Psoas muscle (tissue), 8 donors: ENCODE measurements at regions of chr11 and their contacts with region 1.

Region 1: DNA sequence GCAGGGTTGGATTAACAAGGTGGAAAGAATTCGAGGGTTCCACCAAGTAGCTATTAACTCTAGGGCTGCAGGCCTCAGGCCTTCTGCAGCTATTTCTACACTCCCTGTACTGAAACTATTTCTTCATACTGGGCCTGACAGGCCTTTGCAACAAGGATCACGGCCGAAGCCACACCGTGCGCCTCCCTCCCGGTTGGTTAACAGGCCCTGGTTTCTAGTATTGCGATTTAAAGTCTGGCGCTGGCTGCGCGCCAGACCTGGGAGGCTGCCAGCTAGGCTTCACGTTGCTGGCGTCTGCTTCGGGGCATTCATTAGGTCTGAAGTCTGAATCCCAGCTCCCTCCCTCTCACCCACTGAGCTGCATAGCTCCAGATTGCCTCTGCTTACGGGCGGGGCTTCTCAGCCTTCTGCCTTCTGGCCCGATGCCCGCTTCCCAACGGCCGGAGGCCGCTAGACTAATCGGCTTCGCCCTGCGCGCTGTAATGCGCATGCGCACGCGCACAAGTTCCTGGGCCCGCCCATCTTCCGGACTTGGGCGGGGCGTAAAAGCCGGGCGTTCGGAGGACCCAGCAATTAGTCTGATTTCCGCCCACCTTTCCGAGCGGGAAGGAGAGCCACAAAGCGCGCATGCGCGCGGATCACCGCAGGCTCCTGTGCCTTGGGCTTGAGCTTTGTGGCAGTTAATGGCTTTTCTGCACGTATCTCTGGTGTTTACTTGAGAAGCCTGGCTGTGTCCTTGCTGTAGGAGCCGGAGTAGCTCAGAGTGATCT is 1.6 kb downstream of the LDHA start:
- DNase-seq: peak; percentile 97 to 100
- ATAC-seq: peak; percentile 81 to 87 (median 83)
- H3K4me3 ChIP-seq: peak overlapping the region; percentile 79
- H3K27ac ChIP-seq: peak overlapping the region; percentile 98
- H3K4me1 ChIP-seq: peaks cover 25% of the 10 kb centered on the region
- H3K27me3 ChIP-seq: no peaks in the 10 kb centered on the region
- CTCF ChIP-seq: no peak

Region 2: DNA sequence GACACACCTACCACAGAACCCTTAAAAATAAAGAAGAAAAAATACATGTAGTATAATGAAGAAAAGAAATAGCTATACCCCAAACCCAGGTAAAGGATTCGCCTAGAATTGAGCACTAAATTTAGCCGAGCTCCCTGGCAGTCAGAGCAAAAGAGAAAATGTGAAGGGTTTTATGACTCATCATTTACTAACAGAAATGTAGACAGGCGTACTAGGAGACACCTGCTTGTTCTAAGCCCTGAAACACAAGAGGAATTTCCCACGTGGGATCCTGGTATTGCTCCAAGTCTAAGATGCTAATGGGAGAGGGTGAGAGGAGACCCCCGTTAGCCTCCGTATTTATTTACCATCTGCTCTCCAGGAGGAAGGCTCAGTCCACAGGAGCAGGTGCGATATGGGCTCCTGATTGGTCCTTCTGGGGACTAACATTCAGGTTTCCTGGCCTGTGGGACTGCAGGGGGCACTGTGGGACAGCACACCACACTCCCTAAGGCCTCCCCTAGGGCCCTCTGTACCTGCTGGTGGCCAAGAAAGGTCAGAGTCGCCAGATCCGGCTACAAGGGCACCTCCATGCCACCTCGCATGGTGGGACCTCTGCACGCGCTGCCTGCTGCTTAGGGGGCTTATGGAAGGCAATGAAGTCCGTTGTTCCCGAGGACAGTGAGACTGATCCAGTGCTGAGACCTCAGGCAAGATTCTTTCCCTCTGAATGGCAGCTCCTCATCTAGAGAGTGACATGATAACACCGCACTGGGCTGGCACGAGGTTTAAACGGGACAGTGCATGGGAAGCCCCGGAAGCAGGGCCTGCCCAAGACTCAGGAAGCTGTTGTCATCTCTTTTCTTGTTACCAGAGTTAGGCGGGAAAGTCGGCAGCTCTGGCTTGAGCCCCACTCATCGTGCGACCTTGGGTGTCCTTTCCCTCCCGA is 635.6 kb before region 1 on chr11:
- intact Hi-C with region 1: no loop called
- DNase-seq: peak; percentile 45 to 74
- ATAC-seq: peak; percentile 86 to 95 (median 93)
- H3K4me3 ChIP-seq: no peak overlapping the region
- H3K27ac ChIP-seq: peak overlapping the region; percentile 27
- H3K4me1 ChIP-seq: no peaks in the 10 kb centered on the region
- H3K27me3 ChIP-seq: no peaks in the 10 kb centered on the region
- CTCF ChIP-seq: peak; percentile 58

Region 3: GRCh38 chr11:18321980-18322711 is 73.8 kb before region 1 on chr11 and contains the starts of genes GTF2H1 and HPS5:
- intact Hi-C with region 1: loop called (anchors 5 kb)
- DNase-seq: peak; percentile 94 to 97
- ATAC-seq: peak; percentile 98 to 99 (median 99)
- H3K4me3 ChIP-seq: peak within 1 kb of the TSS; percentile 83
- H3K27ac ChIP-seq: peak within 1 kb of the TSS; percentile 95
- H3K4me1 ChIP-seq: peaks cover 34% of the 10 kb centered on the region
- H3K27me3 ChIP-seq: no peaks in the 10 kb centered on the region
- CTCF ChIP-seq: no peak
- total RNA-seq, gene GTF2H1: 14.5 to 25.2 (median 19.4) TPM
- total RNA-seq, gene HPS5: 7.0 to 11.9 (median 8.8) TPM

Region 4: GRCh38 chr11:18698341-18699268 is 302.7 kb after region 1 on chr11 and contains the start of gene TMEM86A:
- intact Hi-C with region 1: loop called in 1 of 2 experiments (anchors 5 kb)
- DNase-seq: peak; percentile 93 to 96
- ATAC-seq: peak; percentile 95 to 97 (median 96)
- H3K4me3 ChIP-seq: peak within 1 kb of the TSS; percentile 87
- H3K27ac ChIP-seq: peak within 1 kb of the TSS; percentile 79
- H3K4me1 ChIP-seq: peaks cover 11% of the 10 kb centered on the region
- H3K27me3 ChIP-seq: no peaks in the 10 kb centered on the region
- CTCF ChIP-seq: no peak
- total RNA-seq, gene TMEM86A: 1.5 to 3.9 (median 2.8) TPM